CD8-positive, alpha-beta memory T cell (primary cell): ENCODE measurements at regions of chr16 and their contacts with region 1.

Region 1: DNA sequence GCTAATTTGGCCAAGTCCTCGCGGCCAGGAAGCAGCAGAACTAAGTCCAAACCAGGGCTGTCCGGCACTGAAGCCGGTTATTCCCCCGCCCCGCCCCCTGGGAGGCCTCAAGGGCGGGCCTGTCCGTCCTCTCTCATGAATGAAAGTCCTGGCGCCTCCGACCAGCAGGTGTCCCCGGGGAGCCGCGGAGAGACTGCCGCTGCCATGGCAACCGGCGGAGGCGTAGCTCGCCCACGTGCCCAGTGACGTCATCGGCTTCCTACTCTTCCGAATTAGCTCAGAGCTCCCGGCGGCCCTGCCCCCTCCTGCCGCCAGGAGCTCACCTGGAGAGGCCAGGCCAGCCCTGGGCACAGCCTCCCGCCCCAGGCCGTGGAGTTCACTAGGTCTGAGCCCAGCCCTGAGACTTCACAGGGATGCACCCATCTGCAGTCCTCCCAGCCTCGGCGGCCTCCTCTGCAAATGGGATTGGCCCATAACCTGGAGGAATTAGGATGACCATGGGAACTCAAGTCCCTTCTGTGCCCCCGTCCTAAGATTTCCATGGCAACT is 1.3 kb downstream of the SPATA2L start:
- DNase-seq: peak; percentile 92 to 98 (median 97)
- H3K4me3 ChIP-seq: peak overlapping the region; percentile 81
- H3K4me3 Mint-ChIP-seq: peak overlapping the region; percentile 57 to 92 (median 73)
- H3K27ac ChIP-seq: peak overlapping the region; percentile 96
- H3K27ac Mint-ChIP-seq: peak overlapping the region; percentile 81 to 97 (median 90)
- H3K4me1 ChIP-seq: peaks cover 34% of the 10 kb centered on the region
- H3K4me1 Mint-ChIP-seq: peaks cover 20 to 45% (median 30%) of the 10 kb centered on the region in 3 donors
- H3K27me3 ChIP-seq: no peaks in the 10 kb centered on the region
- H3K27me3 Mint-ChIP-seq: no peaks in the 10 kb centered on the region

Region 2: GRCh38 chr16:89615596-89616090 is 84.5 kb before region 1 on chr16:
- CTCF ChIA-PET with region 1: no interaction called
- POLR2A ChIA-PET with region 1: no interaction called
- DNase-seq: peak in 1 of 5 donors; percentile 49
- H3K4me3 ChIP-seq: no peak overlapping the region
- H3K4me3 Mint-ChIP-seq: no peak overlapping the region
- H3K27ac ChIP-seq: no peak overlapping the region
- H3K27ac Mint-ChIP-seq: peak overlapping the region in 2 of 8 donors; percentile 90 to 93
- H3K4me1 ChIP-seq: peaks cover 7% of the 10 kb centered on the region
- H3K4me1 Mint-ChIP-seq: peaks cover 10 to 15% (median 13%) of the 10 kb centered on the region in 3 donors
- H3K27me3 ChIP-seq: no peaks in the 10 kb centered on the region
- H3K27me3 Mint-ChIP-seq: peaks cover 3 to 6% of the 10 kb centered on the region in 2 donors

Region 3: GRCh38 chr16:89657442-89658220 is 42.5 kb before region 1 on chr16 and contains the starts of genes CHMP1A and SPATA33:
- CTCF ChIA-PET with region 1: interaction called, 15 read pairs
- POLR2A ChIA-PET with region 1: no interaction called
- DNase-seq: peak; percentile 92 to 95 (median 93)
- H3K4me3 ChIP-seq: peak within 1 kb of the TSS; percentile 92
- H3K4me3 Mint-ChIP-seq: peak within 1 kb of the TSS; percentile 79 to 92 (median 86)
- H3K27ac ChIP-seq: peak within 1 kb of the TSS; percentile 89
- H3K27ac Mint-ChIP-seq: peak within 1 kb of the TSS; percentile 74 to 93 (median 88)
- H3K4me1 ChIP-seq: peaks cover 21% of the 10 kb centered on the region
- H3K4me1 Mint-ChIP-seq: peaks cover 28 to 47% (median 44%) of the 10 kb centered on the region in 3 donors
- H3K27me3 ChIP-seq: no peaks in the 10 kb centered on the region
- H3K27me3 Mint-ChIP-seq: no peaks in the 10 kb centered on the region
- total RNA-seq, gene CHMP1A: 81.4 to 94.0 TPM
- total RNA-seq, gene SPATA33: 16.9 TPM

Region 4: DNA sequence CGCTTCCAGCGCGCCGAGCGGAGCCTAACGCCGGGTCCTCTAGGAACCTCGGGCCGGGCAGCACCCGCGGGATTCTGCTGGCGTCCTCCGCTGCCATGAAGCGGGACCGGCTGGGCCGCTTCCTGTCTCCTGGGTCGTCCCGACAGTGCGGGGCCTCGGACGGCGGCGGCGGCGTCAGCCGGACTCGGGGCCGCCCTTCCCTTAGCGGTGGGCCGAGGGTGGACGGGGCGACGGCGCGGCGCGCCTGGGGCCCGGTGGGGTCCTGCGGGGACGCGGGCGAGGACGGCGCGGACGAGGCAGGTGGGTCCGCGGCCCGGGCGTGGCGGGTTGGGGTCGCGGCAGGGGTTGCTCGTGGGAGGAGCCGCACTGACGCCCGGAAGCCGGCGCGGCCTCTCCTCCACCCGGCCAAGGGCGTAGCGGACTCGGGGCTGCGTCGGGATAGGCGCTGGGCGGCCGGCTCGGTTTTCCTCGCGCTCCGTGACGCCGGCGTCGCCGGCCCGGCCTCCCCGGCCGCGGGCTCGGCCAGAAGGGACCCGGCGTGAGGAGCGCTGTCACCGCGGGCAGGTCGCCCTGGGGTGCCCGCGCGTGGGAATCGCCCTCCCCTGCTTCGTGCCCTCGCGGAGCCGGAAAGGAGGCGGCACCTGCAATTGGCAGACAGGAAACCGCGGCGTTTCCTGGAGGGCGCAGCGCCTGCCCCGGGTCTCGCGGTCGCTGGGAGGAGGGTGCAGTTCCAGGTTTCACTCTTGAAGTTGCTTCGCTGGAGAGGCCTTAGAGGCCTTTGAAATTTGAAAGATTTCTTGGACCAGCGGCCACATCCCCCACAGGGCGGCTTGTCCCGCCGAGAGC is 21.6 kb after region 1 on chr16:
- CTCF ChIA-PET with region 1: interaction called, 46 read pairs
- POLR2A ChIA-PET with region 1: interaction called, 10 read pairs
- DNase-seq: peak; percentile 88 to 94 (median 93)
- H3K4me3 ChIP-seq: peak overlapping the region; percentile 98
- H3K4me3 Mint-ChIP-seq: peak overlapping the region; percentile 91 to 99 (median 97)
- H3K27ac ChIP-seq: peak overlapping the region; percentile 92
- H3K27ac Mint-ChIP-seq: peak overlapping the region; percentile 98 to 100 (median 99)
- H3K4me1 ChIP-seq: peaks cover 41% of the 10 kb centered on the region
- H3K4me1 Mint-ChIP-seq: peaks cover 17 to 38% (median 28%) of the 10 kb centered on the region in 3 donors
- H3K27me3 ChIP-seq: no peaks in the 10 kb centered on the region
- H3K27me3 Mint-ChIP-seq: peaks cover 0 to 6% of the 10 kb centered on the region in 2 donors

Region 5: GRCh38 chr16:89761304-89761922 is 61.2 kb after region 1 on chr16:
- CTCF ChIA-PET with region 1: interaction called, 14 read pairs
- POLR2A ChIA-PET with region 1: no interaction called
- DNase-seq: peak in 1 of 5 donors; percentile 41
- H3K4me3 ChIP-seq: peak overlapping the region; percentile 52
- H3K4me3 Mint-ChIP-seq: peak overlapping the region; percentile 85 to 94 (median 90)
- H3K27ac ChIP-seq: peak overlapping the region; percentile 32
- H3K27ac Mint-ChIP-seq: peak overlapping the region; percentile 92 to 99 (median 96)
- H3K4me1 ChIP-seq: peaks cover 31% of the 10 kb centered on the region
- H3K4me1 Mint-ChIP-seq: peaks cover 37 to 66% (median 53%) of the 10 kb centered on the region in 3 donors
- H3K27me3 ChIP-seq: no peaks in the 10 kb centered on the region
- H3K27me3 Mint-ChIP-seq: no peaks in the 10 kb centered on the region

Region 6: GRCh38 chr16:89860747-89861304 is 160.7 kb after region 1 on chr16:
- CTCF ChIA-PET with region 1: interaction called, 120 read pairs
- POLR2A ChIA-PET with region 1: interaction called, 13 read pairs
- DNase-seq: peak; percentile 69 to 82 (median 74)
- H3K4me3 ChIP-seq: no peak overlapping the region
- H3K4me3 Mint-ChIP-seq: peak overlapping the region in 4 of 7 donors; percentile 6 to 46 (median 26)
- H3K27ac ChIP-seq: no peak overlapping the region
- H3K27ac Mint-ChIP-seq: peak overlapping the region; percentile 6 to 83 (median 64)
- H3K4me1 ChIP-seq: peaks cover 33% of the 10 kb centered on the region
- H3K4me1 Mint-ChIP-seq: peaks cover 31 to 38% (median 38%) of the 10 kb centered on the region in 3 donors
- H3K27me3 ChIP-seq: no peaks in the 10 kb centered on the region
- H3K27me3 Mint-ChIP-seq: peaks cover 0 to 3% of the 10 kb centered on the region in 2 donors

Region 7: DNA sequence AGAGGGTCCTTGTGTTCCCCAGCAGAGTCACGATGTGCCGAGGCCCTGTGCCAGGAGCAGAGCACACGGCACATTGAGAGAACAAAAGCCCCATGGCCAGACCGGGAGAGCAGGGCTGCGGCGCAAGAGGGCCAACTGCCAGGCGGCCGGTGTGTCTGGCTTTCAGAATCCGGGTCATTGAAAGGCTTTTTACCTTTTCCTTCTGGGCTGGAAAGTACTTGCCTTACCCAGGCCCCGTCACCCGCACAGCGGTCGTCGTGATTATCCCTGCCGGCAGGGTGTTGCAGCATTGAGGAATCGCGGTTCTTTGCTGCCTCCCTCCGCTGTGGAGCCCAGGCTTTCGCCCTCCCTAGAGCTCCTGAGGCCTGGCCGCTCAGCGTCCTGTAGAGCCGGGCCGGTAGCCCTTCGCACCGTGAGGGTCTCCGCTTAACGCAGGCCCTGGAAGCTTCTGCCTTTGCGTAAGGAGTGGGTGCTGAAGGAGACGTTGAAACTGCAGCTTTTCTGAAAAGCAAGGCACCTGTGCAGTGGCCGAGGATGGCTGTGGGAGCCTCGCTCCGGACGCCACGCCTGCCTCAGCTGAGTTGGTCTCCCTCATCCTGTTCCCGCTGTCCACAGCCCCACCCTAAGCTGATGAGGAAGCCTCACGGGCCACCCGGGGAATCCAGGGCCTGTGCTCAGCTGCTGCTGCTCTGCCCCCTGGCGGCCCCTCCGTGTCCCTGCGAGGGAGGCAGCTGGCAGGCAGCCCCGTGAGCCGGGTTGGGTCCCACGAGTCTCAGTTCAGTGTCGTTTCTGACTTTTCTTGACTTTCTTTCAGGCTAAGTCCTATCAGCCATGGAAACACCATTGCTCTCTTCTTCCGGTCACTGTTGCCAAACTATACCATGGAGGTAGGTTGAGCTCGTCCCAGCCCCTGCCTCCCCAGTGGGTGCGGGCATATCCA is 209.9 kb after region 1 on chr16:
- CTCF ChIA-PET with region 1: interaction called, 40 read pairs
- POLR2A ChIA-PET with region 1: no interaction called
- DNase-seq: peak; percentile 53 to 75 (median 61)
- H3K4me3 ChIP-seq: no peak overlapping the region
- H3K4me3 Mint-ChIP-seq: peak overlapping the region in 1 of 7 donors; percentile 28
- H3K27ac ChIP-seq: no peak overlapping the region
- H3K27ac Mint-ChIP-seq: no peak overlapping the region
- H3K4me1 ChIP-seq: peaks cover 6% of the 10 kb centered on the region
- H3K4me1 Mint-ChIP-seq: peaks cover 0 to 21% (median 8%) of the 10 kb centered on the region in 3 donors
- H3K27me3 ChIP-seq: no peaks in the 10 kb centered on the region
- H3K27me3 Mint-ChIP-seq: no peaks in the 10 kb centered on the region